Activated CD8-positive, alpha-beta T cell treated with anti-CD3 and anti-CD28 coated beads, Interleukin-2, amount 10 ng/mL, durations not matched to agents 7 days and 5 days (primary cell): ENCODE measurements at regions of chr11 and their contacts with region 1.

Region 1: GRCh38 chr11:1832211-1832919 is 2.4 kb upstream of the SYT8 start:
- DNase-seq: peak; percentile 68
- ATAC-seq: peak; percentile 71
- H3K4me3 Mint-ChIP-seq: no peak overlapping the region
- H3K27ac Mint-ChIP-seq: no peak overlapping the region
- H3K4me1 Mint-ChIP-seq: no peaks in the 10 kb centered on the region
- H3K27me3 Mint-ChIP-seq: peaks cover 4% of the 10 kb centered on the region

Region 2: GRCh38 chr11:1597331-1598325 is 234.7 kb before region 1 on chr11 and contains the start of gene KRTAP5-2:
- CTCF ChIA-PET with region 1: no interaction called
- POLR2A ChIA-PET with region 1: no interaction called
- DNase-seq: no peak
- ATAC-seq: no peak
- H3K4me3 Mint-ChIP-seq: no peak within 1 kb of the TSS
- H3K27ac Mint-ChIP-seq: no peak within 1 kb of the TSS
- H3K4me1 Mint-ChIP-seq: no peaks in the 10 kb centered on the region
- H3K27me3 Mint-ChIP-seq: peaks cover 47% of the 10 kb centered on the region
- total RNA-seq, gene KRTAP5-2: not detected

Region 3: DNA sequence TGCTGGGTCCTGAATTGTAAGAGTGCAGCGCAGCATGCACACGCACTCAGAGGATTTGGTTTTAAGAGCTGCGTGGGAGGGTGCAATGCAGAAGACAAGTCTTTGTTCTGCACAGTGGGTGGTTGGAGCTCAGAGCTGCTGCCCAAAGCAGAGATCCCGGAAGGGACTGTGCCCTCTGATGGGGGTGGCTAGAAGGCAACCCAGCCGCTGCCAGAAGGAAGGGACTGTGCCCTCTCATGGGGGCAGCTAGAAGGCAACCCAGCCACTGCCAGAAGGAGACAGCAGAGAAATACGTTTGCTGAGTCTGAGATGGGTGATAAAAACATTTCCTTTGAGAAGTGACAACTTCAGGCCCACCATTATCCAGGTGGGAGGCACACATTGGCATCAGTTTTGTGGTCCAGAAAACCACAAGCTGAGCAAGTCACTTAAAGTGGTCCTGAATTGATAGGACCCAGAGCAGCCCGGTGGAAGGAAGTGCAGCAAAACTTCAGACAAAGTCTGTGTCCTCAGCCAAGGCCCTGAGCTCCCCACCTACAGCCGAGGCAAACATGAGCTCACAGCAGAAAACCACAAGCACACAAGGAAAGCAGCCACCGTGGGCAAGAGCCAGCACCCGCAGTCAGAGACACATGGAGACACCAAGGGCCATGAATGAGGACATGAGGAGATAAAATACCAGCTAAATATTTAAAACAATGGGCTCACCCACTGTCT is 131.1 kb before region 1 on chr11:
- CTCF ChIA-PET with region 1: interaction called, 56 read pairs
- POLR2A ChIA-PET with region 1: no interaction called
- DNase-seq: peak; percentile 41
- ATAC-seq: peak; percentile 47
- H3K4me3 Mint-ChIP-seq: no peak overlapping the region
- H3K27ac Mint-ChIP-seq: peak overlapping the region; percentile 2
- H3K4me1 Mint-ChIP-seq: peaks cover 30% of the 10 kb centered on the region
- H3K27me3 Mint-ChIP-seq: peaks cover 8% of the 10 kb centered on the region

Region 4: GRCh38 chr11:1706634-1707400 is 125.5 kb before region 1 on chr11:
- CTCF ChIA-PET with region 1: interaction called, 56 read pairs
- POLR2A ChIA-PET with region 1: no interaction called
- DNase-seq: peak; percentile 44
- ATAC-seq: peak; percentile 44
- H3K4me3 Mint-ChIP-seq: no peak overlapping the region
- H3K27ac Mint-ChIP-seq: no peak overlapping the region
- H3K4me1 Mint-ChIP-seq: peaks cover 25% of the 10 kb centered on the region
- H3K27me3 Mint-ChIP-seq: peaks cover 33% of the 10 kb centered on the region

Region 5: DNA sequence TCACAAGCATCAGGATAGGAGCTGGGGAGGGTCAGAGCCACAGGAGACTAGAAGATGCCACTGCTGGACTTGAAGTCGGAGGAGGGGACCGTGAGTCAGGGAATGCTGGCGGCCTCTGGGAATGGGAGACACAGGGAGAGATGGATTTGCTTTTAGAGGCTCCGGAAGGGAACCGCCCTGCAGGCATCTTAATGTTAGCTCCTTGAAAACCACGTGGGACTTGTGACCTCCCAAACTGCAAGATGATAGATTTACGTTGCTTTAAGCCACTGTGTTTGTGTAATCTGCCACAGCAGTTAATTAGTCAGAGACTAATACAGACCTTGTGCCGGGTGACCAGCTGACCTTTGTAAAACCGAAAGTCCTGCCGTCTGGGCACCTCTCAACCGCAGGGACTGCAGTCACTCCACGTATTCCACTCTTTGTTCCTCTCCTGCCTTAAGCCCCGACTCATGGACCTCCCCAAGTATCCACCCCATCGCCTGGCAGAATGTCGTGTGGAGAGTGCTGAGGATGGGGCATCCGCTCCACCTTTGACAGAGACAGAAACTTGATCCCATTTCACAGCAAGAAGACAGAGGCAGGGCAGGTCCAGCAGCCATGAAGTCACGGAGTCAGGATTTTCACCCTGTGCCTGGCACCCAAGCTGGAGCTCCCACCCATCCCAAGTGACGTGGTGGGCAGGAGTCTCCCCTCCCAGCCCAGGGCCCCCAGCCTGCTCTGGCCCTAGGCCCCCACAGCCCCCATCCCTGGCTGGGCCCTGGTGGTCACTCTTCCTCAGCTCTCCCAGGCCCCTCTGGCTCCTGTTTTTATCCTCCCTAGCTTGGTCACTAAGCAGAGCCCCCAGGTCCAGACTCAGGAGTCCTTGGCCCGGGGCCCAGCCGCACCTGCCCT is 49.3 kb before region 1 on chr11:
- CTCF ChIA-PET with region 1: no interaction called
- POLR2A ChIA-PET with region 1: no interaction called
- DNase-seq: no peak
- ATAC-seq: no peak
- H3K4me3 Mint-ChIP-seq: no peak overlapping the region
- H3K27ac Mint-ChIP-seq: no peak overlapping the region
- H3K4me1 Mint-ChIP-seq: peaks cover 10% of the 10 kb centered on the region
- H3K27me3 Mint-ChIP-seq: peaks cover 4% of the 10 kb centered on the region

Region 6: GRCh38 chr11:1852877-1853276 is 20.5 kb after region 1 on chr11 and contains the start of gene LSP1:
- CTCF ChIA-PET with region 1: interaction called, 16 read pairs
- POLR2A ChIA-PET with region 1: interaction called, 3 read pairs
- DNase-seq: peak; percentile 93
- ATAC-seq: peak; percentile 63
- H3K4me3 Mint-ChIP-seq: peak within 1 kb of the TSS; percentile 99
- H3K27ac Mint-ChIP-seq: peak within 1 kb of the TSS; percentile 98
- H3K4me1 Mint-ChIP-seq: peaks cover 63% of the 10 kb centered on the region
- H3K27me3 Mint-ChIP-seq: peaks cover 3% of the 10 kb centered on the region
- total RNA-seq, gene LSP1: 463 to 477 TPM

Region 7: GRCh38 chr11:1882519-1883238 is 50.3 kb after region 1 on chr11:
- CTCF ChIA-PET with region 1: interaction called, 10 read pairs
- POLR2A ChIA-PET with region 1: no interaction called
- DNase-seq: peak; percentile 83
- ATAC-seq: peak; percentile 85
- H3K4me3 Mint-ChIP-seq: no peak overlapping the region
- H3K27ac Mint-ChIP-seq: no peak overlapping the region
- H3K4me1 Mint-ChIP-seq: peaks cover 16% of the 10 kb centered on the region
- H3K27me3 Mint-ChIP-seq: no peaks in the 10 kb centered on the region

Region 8: DNA sequence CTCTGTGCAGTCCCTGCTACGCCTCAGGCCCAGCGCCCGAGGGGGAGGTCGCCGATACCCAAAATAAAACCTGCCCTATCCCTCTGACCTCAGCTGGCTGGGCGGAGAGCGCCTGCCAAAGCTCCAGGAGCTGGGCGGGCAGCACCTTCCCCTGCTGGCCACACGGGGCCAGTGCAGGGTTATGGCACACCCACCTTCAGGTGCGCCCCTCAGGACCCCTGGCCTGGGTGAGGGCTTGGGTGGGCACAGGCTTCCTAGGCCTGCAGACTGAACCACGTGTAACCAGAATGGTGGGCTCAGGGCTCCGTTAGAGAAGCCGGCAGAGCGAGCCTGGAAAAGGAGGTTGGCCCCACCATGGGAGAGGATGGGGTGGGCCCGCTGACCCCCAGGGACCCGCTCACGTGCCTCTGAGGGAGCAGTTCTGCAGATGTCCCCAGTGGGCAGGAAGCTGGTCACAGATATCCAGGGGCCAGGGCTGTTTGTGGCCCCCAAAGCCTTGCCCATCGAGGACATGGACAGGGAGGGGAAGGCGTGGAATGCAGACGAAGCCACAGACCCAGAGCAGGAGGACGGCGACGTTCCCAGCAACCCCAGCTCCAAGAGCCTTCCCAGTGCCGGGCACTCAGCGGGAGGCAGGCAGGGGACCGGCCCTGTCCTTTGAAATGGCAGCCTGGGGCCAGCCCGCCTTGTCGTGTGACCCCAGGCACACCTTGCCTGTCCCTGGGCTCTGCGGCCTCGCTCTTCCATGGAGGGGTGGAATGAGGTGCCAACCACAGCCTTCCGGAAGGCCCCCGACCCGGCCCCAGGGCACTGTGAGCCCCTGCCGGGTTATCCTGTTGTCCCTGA is 85.5 kb after region 1 on chr11:
- CTCF ChIA-PET with region 1: interaction called, 10 read pairs
- POLR2A ChIA-PET with region 1: no interaction called
- DNase-seq: no peak
- ATAC-seq: no peak
- H3K4me3 Mint-ChIP-seq: no peak overlapping the region
- H3K27ac Mint-ChIP-seq: no peak overlapping the region
- H3K4me1 Mint-ChIP-seq: peaks cover 18% of the 10 kb centered on the region
- H3K27me3 Mint-ChIP-seq: peaks cover 8% of the 10 kb centered on the region

Region 9: DNA sequence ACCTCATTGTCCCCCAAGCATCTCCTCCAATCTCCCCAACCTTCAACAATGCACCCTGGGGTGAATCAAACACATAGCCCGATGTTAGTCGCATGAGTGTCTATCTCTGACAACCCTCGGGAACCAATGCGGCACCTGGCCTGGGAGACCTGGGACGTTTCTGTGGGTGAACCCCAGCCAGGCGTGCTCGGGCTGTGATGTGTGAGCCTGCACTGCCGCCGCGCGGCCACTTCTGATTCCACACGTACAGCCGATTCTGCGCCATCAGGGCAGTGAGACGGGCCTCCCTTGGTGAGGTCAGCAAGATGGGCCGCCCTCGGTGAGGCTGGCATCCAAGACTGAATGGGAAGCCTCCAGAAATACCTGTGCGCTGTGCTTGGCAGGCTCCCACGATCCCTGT is 170.4 kb after region 1 on chr11:
- CTCF ChIA-PET with region 1: interaction called, 38 read pairs
- POLR2A ChIA-PET with region 1: interaction called, 4 read pairs
- DNase-seq: no peak
- ATAC-seq: peak; percentile 57
- H3K4me3 Mint-ChIP-seq: no peak overlapping the region
- H3K27ac Mint-ChIP-seq: no peak overlapping the region
- H3K4me1 Mint-ChIP-seq: no peaks in the 10 kb centered on the region
- H3K27me3 Mint-ChIP-seq: no peaks in the 10 kb centered on the region